GM12878 (cell line): ENCODE measurements at regions of chr5 and their contacts with region 1.

Region 1: DNA sequence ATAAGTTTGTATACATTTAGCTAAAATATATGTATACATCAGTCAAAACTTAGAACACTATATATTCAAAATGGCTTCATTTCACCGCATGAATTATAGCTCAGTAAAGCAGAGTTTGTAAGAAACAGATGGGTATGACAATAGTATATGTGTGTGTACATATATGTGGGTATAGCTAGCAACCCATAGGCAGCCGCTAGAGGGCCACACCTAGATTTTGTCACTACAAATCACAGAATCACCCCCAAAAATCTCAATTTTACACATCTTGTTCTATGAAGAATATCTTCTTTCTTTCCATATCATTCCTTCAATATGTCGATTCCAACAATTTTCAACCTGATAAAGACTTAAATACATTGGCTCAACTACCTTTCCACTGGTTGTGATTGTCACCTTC is 357.8 kb upstream of the CCNG1 start:
- DNase-seq: no peak
- ATAC-seq: peak; percentile 87
- H3K4me3 ChIP-seq: no peak overlapping the region
- H3K27ac ChIP-seq: no peak overlapping the region
- H3K4me1 ChIP-seq: no peaks in the 10 kb centered on the region
- H3K27me3 ChIP-seq: no peaks in the 10 kb centered on the region
- CTCF ChIP-seq: peak; percentile 42 to 69 (median 55); a peak in 4 of 6 replicates
- EP300 ChIP-seq: no peak
- POLR2A ChIP-seq: no peak
- RAD21 ChIP-seq: peak; percentile 53

Region 2: DNA sequence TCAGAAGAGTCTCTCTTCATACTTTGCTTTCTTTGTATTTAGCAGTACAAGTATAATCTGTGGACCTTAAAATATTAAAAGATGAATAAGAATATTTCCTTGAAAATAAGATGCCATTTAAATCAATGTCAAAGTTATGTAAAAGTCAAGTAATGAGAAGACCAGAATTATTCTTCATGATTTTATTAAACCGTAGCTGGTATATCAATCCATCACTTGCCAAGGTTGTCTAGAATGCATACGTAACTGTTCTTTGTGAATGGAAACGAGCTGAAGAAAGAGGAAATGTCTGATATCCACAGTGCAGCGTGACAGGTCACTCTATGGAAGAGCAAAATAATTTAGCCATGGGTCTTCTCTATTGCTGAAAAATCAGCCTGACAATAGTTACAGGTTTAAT is 130.9 kb before region 1 on chr5:
- CTCF ChIA-PET with region 1: no interaction called
- POLR2A ChIA-PET with region 1: no interaction called
- RAD21 ChIA-PET with region 1: no interaction called
- SMC1A ChIA-PET with region 1: no interaction called
- in situ Hi-C with region 1: no loop called
- intact Hi-C with region 1: no loop called
- DNase-seq: no peak
- ATAC-seq: no peak
- H3K4me3 ChIP-seq: no peak overlapping the region
- H3K27ac ChIP-seq: no peak overlapping the region
- H3K4me1 ChIP-seq: no peaks in the 10 kb centered on the region
- H3K27me3 ChIP-seq: no peaks in the 10 kb centered on the region
- CTCF ChIP-seq: no peak
- EP300 ChIP-seq: no peak
- POLR2A ChIP-seq: no peak
- RAD21 ChIP-seq: no peak

Region 3: DNA sequence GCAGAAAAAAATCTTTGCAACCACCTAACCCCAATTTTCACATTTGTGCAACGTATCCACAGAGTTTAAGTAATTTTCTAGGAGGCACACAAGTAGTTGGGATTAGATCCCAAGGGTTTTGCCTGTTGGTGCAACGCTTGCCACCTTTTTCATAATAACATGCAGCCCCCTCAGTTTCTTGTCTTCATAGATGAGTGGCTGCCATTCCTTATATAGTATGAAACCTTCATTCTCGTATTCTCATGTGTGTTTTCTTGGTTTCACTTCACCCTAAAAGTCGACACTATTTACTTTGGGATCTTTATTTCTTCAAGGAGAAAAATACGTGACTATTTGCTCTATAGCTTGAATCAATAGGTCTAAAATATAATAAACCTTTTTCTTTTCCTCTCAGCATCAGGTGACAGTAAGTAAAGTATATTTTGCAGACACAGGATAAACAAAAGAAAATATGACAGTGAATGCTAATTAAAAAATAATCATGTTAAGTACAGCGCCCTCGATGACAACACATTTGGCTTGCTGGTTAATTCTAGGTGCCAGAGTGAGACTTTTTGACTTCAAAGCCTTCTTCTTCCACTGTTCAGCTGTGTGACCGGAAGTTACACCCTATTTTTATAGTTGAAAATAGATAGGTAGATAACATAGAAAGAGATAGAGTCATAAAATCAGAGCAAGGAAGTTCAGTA is 15.0 kb after region 1 on chr5:
- CTCF ChIA-PET with region 1: interaction called, 14 read pairs
- POLR2A ChIA-PET with region 1: no interaction called
- RAD21 ChIA-PET with region 1: interaction called, 3 read pairs
- SMC1A ChIA-PET with region 1: interaction called, 17 read pairs
- in situ Hi-C with region 1: no loop called
- intact Hi-C with region 1: no loop called
- DNase-seq: peak; percentile 53
- ATAC-seq: peak; percentile 94
- H3K4me3 ChIP-seq: peak overlapping the region; percentile 9; the same call in 1 of the 2 replicates
- H3K27ac ChIP-seq: peak overlapping the region; percentile 90
- H3K4me1 ChIP-seq: peaks cover 10% of the 10 kb centered on the region
- H3K27me3 ChIP-seq: no peaks in the 10 kb centered on the region
- CTCF ChIP-seq: no peak
- EP300 ChIP-seq: peak; percentile 38 to 60; a peak in 3 of 4 replicates
- POLR2A ChIP-seq: no peak
- RAD21 ChIP-seq: no peak

Region 4: GRCh38 chr5:163104464-163104863 is 24.8 kb after region 1 on chr5:
- CTCF ChIA-PET with region 1: interaction called, 13 read pairs
- POLR2A ChIA-PET with region 1: no interaction called
- RAD21 ChIA-PET with region 1: no interaction called
- SMC1A ChIA-PET with region 1: interaction called, 6 read pairs
- in situ Hi-C with region 1: no loop called
- intact Hi-C with region 1: no loop called
- DNase-seq: no peak
- ATAC-seq: no peak
- H3K4me3 ChIP-seq: no peak overlapping the region
- H3K27ac ChIP-seq: no peak overlapping the region
- H3K4me1 ChIP-seq: no peaks in the 10 kb centered on the region; the same call in 1 of the 2 replicates
- H3K27me3 ChIP-seq: no peaks in the 10 kb centered on the region
- CTCF ChIP-seq: peak in 1 of 3 experiments; percentile 31; a peak in 1 of 6 replicates
- EP300 ChIP-seq: no peak
- POLR2A ChIP-seq: no peak
- RAD21 ChIP-seq: peak; percentile 45; the same call in 1 of the 2 replicates

Region 5: DNA sequence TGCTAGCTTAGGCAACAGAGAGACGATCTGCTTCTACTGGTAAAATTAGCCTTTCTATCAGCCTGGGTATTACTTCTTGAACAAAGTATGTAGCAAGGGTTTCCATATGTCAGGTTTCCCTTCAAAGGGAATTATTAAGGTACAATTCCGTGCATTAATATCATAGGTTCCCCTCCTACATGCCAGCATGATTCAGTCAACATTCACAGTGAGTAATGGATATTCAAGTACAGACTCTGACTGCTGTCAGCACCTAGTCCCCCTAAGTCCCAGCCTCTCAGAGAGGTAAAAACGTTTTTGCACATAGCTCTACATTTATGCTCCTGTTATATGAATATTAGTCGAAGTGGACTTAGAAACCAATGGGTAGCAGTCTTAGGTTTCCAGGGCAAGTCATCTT is 35.4 kb after region 1 on chr5:
- CTCF ChIA-PET with region 1: no interaction called
- POLR2A ChIA-PET with region 1: no interaction called
- RAD21 ChIA-PET with region 1: no interaction called
- SMC1A ChIA-PET with region 1: no interaction called
- in situ Hi-C with region 1: no loop called
- intact Hi-C with region 1: no loop called
- DNase-seq: no peak
- ATAC-seq: no peak
- H3K4me3 ChIP-seq: no peak overlapping the region
- H3K27ac ChIP-seq: no peak overlapping the region
- H3K4me1 ChIP-seq: no peaks in the 10 kb centered on the region
- H3K27me3 ChIP-seq: no peaks in the 10 kb centered on the region
- CTCF ChIP-seq: no peak
- EP300 ChIP-seq: no peak
- POLR2A ChIP-seq: no peak
- RAD21 ChIP-seq: no peak

Region 6: DNA sequence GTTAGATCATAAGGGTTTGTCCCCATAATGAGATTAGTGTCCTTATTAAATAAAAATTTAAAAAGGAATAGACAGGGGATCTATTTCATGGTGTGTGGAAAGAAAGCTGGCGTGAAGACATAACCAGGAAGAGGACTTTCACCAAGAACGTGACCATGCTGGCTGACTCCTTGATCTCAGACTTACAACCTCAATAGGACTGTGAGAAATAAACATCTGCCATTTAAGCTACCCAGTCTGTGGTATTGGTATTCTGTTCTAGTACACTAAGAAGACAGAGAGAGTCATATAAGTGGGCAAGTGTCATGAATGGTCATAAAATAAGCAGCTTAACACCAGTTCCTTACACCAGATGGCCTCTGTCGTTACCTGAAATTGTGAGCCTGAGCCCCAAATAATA is 98.4 kb after region 1 on chr5:
- CTCF ChIA-PET with region 1: no interaction called
- POLR2A ChIA-PET with region 1: no interaction called
- RAD21 ChIA-PET with region 1: no interaction called
- SMC1A ChIA-PET with region 1: no interaction called
- in situ Hi-C with region 1: no loop called
- intact Hi-C with region 1: loop called (anchors 5 kb)
- DNase-seq: no peak
- ATAC-seq: no peak
- H3K4me3 ChIP-seq: no peak overlapping the region
- H3K27ac ChIP-seq: no peak overlapping the region
- H3K4me1 ChIP-seq: no peaks in the 10 kb centered on the region
- H3K27me3 ChIP-seq: no peaks in the 10 kb centered on the region
- CTCF ChIP-seq: no peak
- EP300 ChIP-seq: no peak
- POLR2A ChIP-seq: no peak
- RAD21 ChIP-seq: no peak

Region 7: GRCh38 chr5:163269624-163270023 is 190.0 kb after region 1 on chr5:
- CTCF ChIA-PET with region 1: interaction called, 7 read pairs
- POLR2A ChIA-PET with region 1: no interaction called
- RAD21 ChIA-PET with region 1: interaction called, 5 read pairs
- SMC1A ChIA-PET with region 1: interaction called, 8 read pairs
- in situ Hi-C with region 1: no loop called
- intact Hi-C with region 1: loop called (anchors 5 kb)
- DNase-seq: no peak
- ATAC-seq: peak; percentile 84
- H3K4me3 ChIP-seq: no peak overlapping the region
- H3K27ac ChIP-seq: no peak overlapping the region
- H3K4me1 ChIP-seq: no peaks in the 10 kb centered on the region
- H3K27me3 ChIP-seq: no peaks in the 10 kb centered on the region; a peak in 1 of 4 replicates
- CTCF ChIP-seq: peak in 2 of 3 experiments; percentile 35 to 65; a peak in 4 of 6 replicates
- EP300 ChIP-seq: no peak
- POLR2A ChIP-seq: no peak
- RAD21 ChIP-seq: peak; percentile 77